Activated CD4-positive, alpha-beta T cell treated with anti-CD3 and anti-CD28 coated beads for 36 hours (primary cell): ENCODE measurements at regions of chr1 and their contacts with region 1.

Region 1: DNA sequence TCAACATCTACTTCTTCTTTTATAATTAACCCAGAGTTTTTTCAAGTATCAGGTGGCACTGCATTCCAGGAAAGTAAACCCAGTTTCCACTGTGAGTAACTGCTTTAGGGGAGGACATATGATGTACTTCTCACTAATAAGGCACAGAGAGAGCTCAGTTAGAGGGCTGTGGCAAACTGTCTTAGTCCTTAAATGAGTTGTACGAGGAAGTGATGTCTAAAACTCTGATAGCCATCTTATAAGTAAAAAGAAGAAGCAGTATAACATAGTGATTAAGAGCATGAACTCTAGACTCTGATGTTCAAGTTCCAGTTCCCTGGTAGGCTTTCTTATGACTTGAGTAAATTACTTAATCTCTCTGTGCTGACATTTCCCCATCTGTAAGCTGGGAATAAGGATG is 58.7 kb upstream of the PTGS2 start:
- DNase-seq: peak; percentile 20
- ATAC-seq: peak; percentile 90
- H3K4me3 Mint-ChIP-seq: no peak overlapping the region
- H3K27ac Mint-ChIP-seq: no peak overlapping the region
- H3K4me1 Mint-ChIP-seq: peaks cover 17% of the 10 kb centered on the region
- H3K27me3 Mint-ChIP-seq: peaks cover 7% of the 10 kb centered on the region

Region 2: GRCh38 chr1:186618401-186619170 is 120.3 kb before region 1 on chr1:
- CTCF ChIA-PET with region 1: no interaction called
- POLR2A ChIA-PET with region 1: no interaction called
- intact Hi-C with region 1: loop called in 1 of 2 experiments (anchors 5 kb)
- DNase-seq: peak; percentile 69
- ATAC-seq: peak; percentile 95
- H3K4me3 Mint-ChIP-seq: peak overlapping the region; percentile 5
- H3K27ac Mint-ChIP-seq: no peak overlapping the region
- H3K4me1 Mint-ChIP-seq: peaks cover 36% of the 10 kb centered on the region
- H3K27me3 Mint-ChIP-seq: peaks cover 15% of the 10 kb centered on the region

Region 3: GRCh38 chr1:186689376-186689775 is 49.5 kb before region 1 on chr1:
- CTCF ChIA-PET with region 1: no interaction called
- POLR2A ChIA-PET with region 1: no interaction called
- intact Hi-C with region 1: no loop called
- DNase-seq: no peak
- ATAC-seq: no peak
- H3K4me3 Mint-ChIP-seq: no peak overlapping the region
- H3K27ac Mint-ChIP-seq: no peak overlapping the region
- H3K4me1 Mint-ChIP-seq: no peaks in the 10 kb centered on the region
- H3K27me3 Mint-ChIP-seq: peaks cover 3% of the 10 kb centered on the region

Region 4: DNA sequence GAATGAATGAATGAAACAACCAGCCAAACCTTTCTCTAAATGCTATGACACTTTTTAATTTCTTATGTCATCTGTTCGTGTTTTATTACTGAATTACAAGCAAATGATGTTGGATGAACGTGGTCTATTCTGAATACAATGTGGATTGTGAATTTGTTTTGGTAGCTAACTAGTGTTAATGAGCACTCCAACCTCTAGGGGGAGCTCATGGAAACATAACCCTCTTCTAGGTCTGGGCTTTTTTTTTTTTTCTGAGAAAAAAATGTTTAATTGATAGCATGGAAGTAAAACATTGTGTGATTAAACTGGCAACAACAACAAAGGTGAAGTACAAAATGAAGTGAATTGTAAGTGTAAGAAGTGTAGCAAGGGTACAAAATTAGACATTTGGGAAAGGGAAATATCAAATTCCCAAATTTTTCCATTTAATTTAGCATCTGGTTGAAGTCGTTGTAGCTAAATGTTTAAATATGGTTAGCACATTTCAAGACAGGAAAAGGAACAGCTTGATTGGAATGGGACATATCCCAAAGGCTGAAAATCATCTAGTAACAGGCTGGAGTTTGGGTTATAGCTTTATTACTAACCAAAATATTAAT is 16.1 kb before region 1 on chr1:
- CTCF ChIA-PET with region 1: interaction called, 6 read pairs
- POLR2A ChIA-PET with region 1: no interaction called
- intact Hi-C with region 1: loop called in 1 of 2 experiments (anchors 2 kb)
- DNase-seq: peak; percentile 16
- ATAC-seq: peak; percentile 42
- H3K4me3 Mint-ChIP-seq: no peak overlapping the region
- H3K27ac Mint-ChIP-seq: no peak overlapping the region
- H3K4me1 Mint-ChIP-seq: no peaks in the 10 kb centered on the region
- H3K27me3 Mint-ChIP-seq: peaks cover 3% of the 10 kb centered on the region

Region 5: DNA sequence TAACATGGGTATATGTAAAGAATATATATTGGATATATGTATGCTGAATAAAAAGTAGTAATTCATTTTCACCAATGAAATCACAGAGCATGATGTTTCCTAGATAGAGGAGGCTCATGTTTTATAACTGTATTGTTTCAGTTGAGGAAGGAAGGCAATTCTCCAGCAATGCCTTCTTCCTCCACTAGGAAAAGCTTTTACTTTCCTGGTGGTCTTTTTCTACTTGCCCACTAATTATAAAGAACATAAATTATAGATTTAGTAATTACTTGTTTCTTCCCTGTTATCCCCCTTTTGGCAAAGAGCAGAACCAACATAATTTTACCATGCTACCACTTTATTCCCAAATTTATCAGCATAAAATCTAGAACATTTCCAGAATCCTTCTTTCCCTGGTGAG is 248.8 kb after region 1 on chr1:
- CTCF ChIA-PET with region 1: no interaction called
- POLR2A ChIA-PET with region 1: no interaction called
- intact Hi-C with region 1: no loop called
- DNase-seq: no peak
- ATAC-seq: no peak
- H3K4me3 Mint-ChIP-seq: no peak overlapping the region
- H3K27ac Mint-ChIP-seq: no peak overlapping the region
- H3K4me1 Mint-ChIP-seq: no peaks in the 10 kb centered on the region
- H3K27me3 Mint-ChIP-seq: peaks cover 4% of the 10 kb centered on the region